Kidney (tissue), 22 donors: ENCODE measurements at regions of chr1 and their contacts with region 1.

Region 1: DNA sequence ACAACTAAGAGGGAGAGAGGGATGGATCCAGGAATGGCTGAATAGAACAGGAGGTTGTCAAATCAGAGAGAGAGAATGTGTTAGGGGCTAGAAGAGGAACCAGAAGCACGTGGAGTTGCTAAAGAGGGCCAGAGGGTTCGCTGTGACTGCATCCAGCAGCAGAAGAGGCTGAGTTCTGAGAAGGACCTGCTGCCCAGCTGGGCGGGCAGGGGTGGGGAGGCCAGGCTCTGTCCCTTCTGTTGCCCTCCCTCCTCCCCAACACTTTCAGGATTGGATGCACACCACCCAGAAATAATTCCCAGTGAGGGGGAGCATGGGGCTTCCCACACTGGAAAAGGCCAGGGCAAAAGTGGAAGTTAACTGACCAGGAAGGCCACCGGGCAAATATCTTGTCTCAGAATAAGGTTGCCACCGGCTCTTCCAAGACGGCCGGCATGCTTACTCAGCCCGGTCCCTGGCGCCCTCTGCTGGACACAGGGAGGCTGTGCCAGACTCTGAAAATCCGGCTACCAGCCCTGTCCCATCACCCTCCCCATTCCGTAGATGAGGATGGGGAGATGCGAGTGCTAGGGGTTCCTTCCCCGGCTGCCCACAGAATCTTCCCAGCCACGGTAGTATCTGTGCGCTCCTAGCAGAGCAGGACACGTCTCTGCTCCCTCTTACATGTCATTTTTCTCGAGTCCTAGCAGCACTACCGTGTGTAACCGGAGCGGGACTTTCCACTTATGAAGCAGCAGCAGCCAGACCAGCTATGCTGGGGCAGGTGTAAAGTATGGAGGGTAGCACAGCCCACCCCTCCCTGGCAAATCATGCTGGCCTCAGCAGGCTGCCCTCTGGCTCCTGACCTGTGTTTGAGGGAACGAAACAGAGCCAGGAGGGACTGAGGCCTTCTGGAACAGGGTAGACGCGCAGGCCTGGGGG is 46.8 kb upstream of the A3GALT2 start:
- DNase-seq: peak; percentile 85 to 95 (median 91)
- H3K4me3 ChIP-seq: no peak overlapping the region
- H3K27ac ChIP-seq: no peak overlapping the region
- H3K4me1 ChIP-seq: peaks cover 25 to 48% (median 36%) of the 10 kb centered on the region in 3 donors
- H3K27me3 ChIP-seq: no peaks in the 10 kb centered on the region
- CTCF ChIP-seq: peak; percentile 99

Region 2: GRCh38 chr1:32953495-32953894 is 414.2 kb before region 1 on chr1:
- intact Hi-C with region 1: no loop called
- DNase-seq: no peak
- H3K4me3 ChIP-seq: no peak overlapping the region
- H3K27ac ChIP-seq: no peak overlapping the region
- H3K4me1 ChIP-seq: peaks cover 0 to 8% (median 5%) of the 10 kb centered on the region in 3 donors
- H3K27me3 ChIP-seq: no peaks in the 10 kb centered on the region
- CTCF ChIP-seq: no peak

Region 3: GRCh38 chr1:33295450-33296081 is 72.2 kb before region 1 on chr1:
- intact Hi-C with region 1: loop called (anchors 5 kb)
- DNase-seq: peak; percentile 89 to 93 (median 90)
- H3K4me3 ChIP-seq: no peak overlapping the region
- H3K27ac ChIP-seq: no peak overlapping the region
- H3K4me1 ChIP-seq: peaks cover 0 to 6% (median 2%) of the 10 kb centered on the region in 3 donors
- H3K27me3 ChIP-seq: no peaks in the 10 kb centered on the region
- CTCF ChIP-seq: peak; percentile 97